Endothelial cell of umbilical vein (primary cell): ENCODE measurements at regions of chr14 and their contacts with region 1.

Region 1: DNA sequence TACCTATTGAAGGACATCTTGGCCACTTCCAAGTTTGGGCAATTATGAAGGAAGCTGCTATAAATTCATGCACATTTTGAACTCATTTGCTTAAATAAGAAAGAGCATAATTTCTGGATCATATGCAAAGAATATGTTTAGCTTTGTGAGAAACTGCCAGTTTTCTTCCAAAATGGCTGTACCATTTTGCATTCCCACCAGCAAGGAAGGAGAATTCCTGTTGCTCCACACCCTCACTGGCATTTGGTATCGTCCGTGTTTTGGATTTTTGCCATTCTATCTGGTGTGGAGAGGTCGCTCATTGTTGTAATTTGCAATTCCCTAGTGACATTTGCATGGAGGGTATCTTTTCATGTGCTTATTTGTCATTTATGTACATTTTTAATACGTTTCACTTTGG is 339.3 kb downstream of the DAD1 start:
- DNase-seq: no peak
- H3K4me3 ChIP-seq: no peak overlapping the region
- H3K27ac ChIP-seq: no peak overlapping the region
- H3K4me1 ChIP-seq: no peaks in the 10 kb centered on the region
- H3K27me3 ChIP-seq: peaks cover 0 to 17% of the 10 kb centered on the region in 2 experiments
- CTCF ChIP-seq: no peak
- POLR2A ChIP-seq: no peak

Region 2: GRCh38 chr14:22303589-22304195 is 53.9 kb after region 1 on chr14:
- CTCF ChIA-PET with region 1: no interaction called
- POLR2A ChIA-PET with region 1: no interaction called
- dilution Hi-C with region 1: no loop called
- intact Hi-C with region 1: loop called (anchors 1 kb)
- DNase-seq: peak; percentile 13
- H3K4me3 ChIP-seq: no peak overlapping the region
- H3K27ac ChIP-seq: no peak overlapping the region
- H3K4me1 ChIP-seq: no peaks in the 10 kb centered on the region
- H3K27me3 ChIP-seq: peaks cover 28 to 31% of the 10 kb centered on the region in 2 experiments
- CTCF ChIP-seq: peak; percentile 8 to 29
- POLR2A ChIP-seq: no peak